ENCODE measurements at regions of chr2 and their contacts with region 1.

Region 1: GRCh38 chr2:74334931-74335333 is 8.3 kb downstream of the SLC4A5 start:
- DNase-seq: peak; percentile 76
- H3K4me3 Mint-ChIP-seq: no peak overlapping the region
- H3K27ac Mint-ChIP-seq: no peak overlapping the region
- H3K4me1 Mint-ChIP-seq: no peaks in the 10 kb centered on the region
- H3K27me3 Mint-ChIP-seq: no peaks in the 10 kb centered on the region

Region 2: GRCh38 chr2:73828818-73829570 is 505.9 kb before region 1 on chr2 and contains the start of gene STAMBP:
- CTCF ChIA-PET with region 1: interaction called, 22 read pairs
- POLR2A ChIA-PET with region 1: no interaction called
- DNase-seq: peak; percentile 93
- H3K4me3 Mint-ChIP-seq: peak within 1 kb of the TSS; percentile 95
- H3K27ac Mint-ChIP-seq: peak within 1 kb of the TSS; percentile 93
- H3K4me1 Mint-ChIP-seq: peaks cover 43% of the 10 kb centered on the region
- H3K27me3 Mint-ChIP-seq: no peaks in the 10 kb centered on the region
- total RNA-seq, gene STAMBP: 51.1 to 51.2 TPM

Region 3: DNA sequence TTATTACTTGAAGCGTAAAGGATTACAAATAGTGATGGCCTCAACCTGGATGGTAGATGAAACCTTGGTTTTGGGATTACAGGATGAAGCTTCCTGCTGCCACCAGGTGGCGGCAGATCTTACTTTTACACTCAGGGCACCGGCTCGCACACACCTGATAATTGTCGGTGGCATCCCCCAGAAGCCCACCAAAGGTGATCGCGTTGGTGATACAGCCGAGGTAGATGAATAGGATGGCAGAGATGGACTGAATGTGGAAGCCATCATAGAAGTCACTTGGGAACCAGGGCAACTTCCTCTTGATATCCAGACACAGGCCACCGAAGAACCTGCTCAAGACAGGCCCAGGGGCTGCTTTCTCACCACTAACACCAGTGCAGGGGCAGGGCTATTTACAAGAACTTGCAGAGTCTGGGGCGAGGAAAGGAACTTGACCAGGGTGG is 84.7 kb before region 1 on chr2:
- CTCF ChIA-PET with region 1: interaction called, 136 read pairs
- POLR2A ChIA-PET with region 1: interaction called, 9 read pairs
- DNase-seq: peak; percentile 60
- H3K4me3 Mint-ChIP-seq: no peak overlapping the region
- H3K27ac Mint-ChIP-seq: no peak overlapping the region
- H3K4me1 Mint-ChIP-seq: peaks cover 8% of the 10 kb centered on the region
- H3K27me3 Mint-ChIP-seq: no peaks in the 10 kb centered on the region

Region 4: GRCh38 chr2:74307720-74308119 is 27.2 kb before region 1 on chr2:
- CTCF ChIA-PET with region 1: interaction called, 14 read pairs
- POLR2A ChIA-PET with region 1: interaction called, 3 read pairs
- DNase-seq: no peak
- H3K4me3 Mint-ChIP-seq: no peak overlapping the region
- H3K27ac Mint-ChIP-seq: no peak overlapping the region
- H3K4me1 Mint-ChIP-seq: no peaks in the 10 kb centered on the region
- H3K27me3 Mint-ChIP-seq: peaks cover 2% of the 10 kb centered on the region

Region 5: DNA sequence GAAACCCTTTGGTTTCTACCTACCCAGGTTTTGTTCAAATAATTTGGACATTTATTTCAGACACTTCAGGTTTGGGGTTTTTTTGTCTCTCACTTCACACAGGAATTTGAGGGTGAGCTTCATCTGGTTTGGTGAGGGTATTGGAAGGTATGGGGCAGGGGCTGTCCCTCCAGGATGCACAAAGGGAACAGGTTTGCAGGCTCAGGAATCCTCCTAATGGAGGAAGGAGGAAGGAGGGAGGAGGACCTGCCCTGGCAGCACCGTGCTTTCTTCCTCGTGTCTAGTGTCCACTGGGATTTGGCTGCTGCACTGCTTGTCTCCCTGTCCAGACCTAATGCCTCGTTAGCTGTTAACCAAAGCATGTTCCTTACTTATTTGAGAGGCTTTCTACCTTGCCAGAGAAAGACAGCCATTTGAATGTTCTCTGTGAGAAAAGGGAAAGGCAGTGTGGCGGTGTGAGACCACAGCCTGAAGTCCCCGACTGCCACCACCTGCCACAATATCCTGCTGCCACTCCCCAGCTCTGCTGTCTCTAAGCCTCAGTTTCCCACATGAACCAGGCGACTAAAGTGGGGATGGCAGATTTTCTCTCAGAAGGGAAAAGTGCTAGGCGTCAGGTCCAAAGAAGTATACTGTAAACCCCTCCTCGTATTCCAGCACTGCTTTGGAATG is 10.5 kb after region 1 on chr2:
- CTCF ChIA-PET with region 1: interaction called, 30 read pairs
- POLR2A ChIA-PET with region 1: no interaction called
- DNase-seq: no peak
- H3K4me3 Mint-ChIP-seq: no peak overlapping the region
- H3K27ac Mint-ChIP-seq: no peak overlapping the region
- H3K4me1 Mint-ChIP-seq: peaks cover 2% of the 10 kb centered on the region
- H3K27me3 Mint-ChIP-seq: no peaks in the 10 kb centered on the region

Region 6: DNA sequence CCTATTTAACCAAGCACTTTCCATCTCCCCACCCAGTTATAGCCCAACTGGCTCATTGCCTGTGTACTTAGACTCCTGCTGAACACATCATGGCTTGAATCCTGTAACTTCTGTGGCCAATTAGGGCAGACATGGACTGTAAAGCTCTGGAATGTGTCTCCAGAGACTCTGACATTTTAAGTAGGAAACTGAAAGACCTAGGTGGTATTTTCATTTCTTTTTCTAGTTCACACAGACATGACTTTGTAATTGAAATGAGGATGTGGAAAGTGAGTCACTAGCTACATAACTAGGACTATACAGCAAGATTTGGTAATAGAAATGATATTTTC is 231.8 kb after region 1 on chr2:
- CTCF ChIA-PET with region 1: no interaction called
- POLR2A ChIA-PET with region 1: no interaction called
- DNase-seq: no peak
- H3K4me3 Mint-ChIP-seq: no peak overlapping the region
- H3K27ac Mint-ChIP-seq: peak overlapping the region; percentile 48
- H3K4me1 Mint-ChIP-seq: peaks cover 43% of the 10 kb centered on the region
- H3K27me3 Mint-ChIP-seq: peaks cover 5% of the 10 kb centered on the region

Measured in activated CD4-positive, alpha-beta memory T cell treated with anti-CD3 and anti-CD28 coated beads, Interleukin-2, amount 10 ng/mL, durations not matched to agents 7 days and 5 days (primary cell).